ENCODE measurements at regions of chr18 and their contacts with region 1.

Region 1: DNA sequence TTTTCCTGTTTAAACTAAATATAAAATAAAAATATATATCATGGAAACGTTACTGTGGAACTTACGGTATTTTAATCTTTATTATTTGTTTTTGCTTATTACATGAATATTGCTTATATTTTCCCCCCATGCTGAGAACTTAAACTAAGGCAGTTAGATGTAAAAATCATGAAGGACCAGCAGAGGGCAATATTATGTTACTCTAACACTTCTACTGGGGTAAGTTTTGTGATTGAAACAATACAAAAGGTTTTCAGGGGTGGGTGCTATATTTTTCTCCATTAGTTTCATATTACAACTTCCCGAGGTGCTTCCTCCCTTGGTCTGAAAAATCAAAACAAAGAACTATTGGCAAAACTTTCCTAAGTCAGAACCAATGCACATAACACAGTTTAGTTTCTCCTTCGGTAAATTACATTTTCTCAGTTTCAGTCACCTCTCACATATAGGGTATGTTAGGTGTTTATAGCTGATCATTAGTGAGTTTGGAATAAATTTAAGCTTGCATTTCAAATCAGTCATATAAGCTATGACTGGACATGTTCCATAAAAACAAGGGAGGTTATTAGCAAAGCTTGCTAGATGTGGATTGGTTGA is 54.8 kb downstream of the ZNF407 start:
- DNase-seq: no peak
- H3K4me3 ChIP-seq: no peak overlapping the region
- H3K27ac ChIP-seq: peak overlapping the region in 1 of 4 donors; percentile 46
- H3K4me1 ChIP-seq: peaks cover 0 to 25% (median 4%) of the 10 kb centered on the region in 4 donors
- H3K27me3 ChIP-seq: no peaks in the 10 kb centered on the region
- CTCF ChIP-seq: peak in 3 of 4 experiments; percentile 38 to 56 (median 55)
- EP300 ChIP-seq: no peak
- POLR2A ChIP-seq: no peak

Region 2: DNA sequence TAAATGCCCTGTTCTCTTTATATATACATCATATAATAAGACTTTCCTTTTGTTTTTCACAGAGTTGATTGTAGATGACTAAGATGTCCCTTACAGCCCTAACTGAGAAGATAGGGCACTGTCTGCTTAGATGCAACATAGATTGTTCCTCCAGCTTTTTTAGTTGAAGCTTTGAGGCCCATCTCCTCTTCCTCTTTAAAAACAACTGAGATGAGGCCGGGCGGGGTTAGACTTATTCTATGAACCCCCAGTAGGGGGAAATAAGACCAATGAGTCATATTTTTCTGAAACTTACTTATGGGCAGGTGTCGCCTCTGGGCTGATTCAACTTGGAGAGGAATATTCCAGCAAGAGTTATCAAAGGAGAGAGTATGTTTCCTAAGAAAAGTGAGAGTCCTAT is 589.5 kb before region 1 on chr18:
- intact Hi-C with region 1: no loop called
- DNase-seq: no peak
- H3K4me3 ChIP-seq: no peak overlapping the region
- H3K27ac ChIP-seq: no peak overlapping the region
- H3K4me1 ChIP-seq: no peaks in the 10 kb centered on the region
- H3K27me3 ChIP-seq: no peaks in the 10 kb centered on the region
- CTCF ChIP-seq: no peak
- EP300 ChIP-seq: no peak
- POLR2A ChIP-seq: no peak

Region 3: GRCh38 chr18:75041586-75041985 is 389.1 kb after region 1 on chr18:
- intact Hi-C with region 1: loop called (anchors 5 kb)
- DNase-seq: no peak
- H3K4me3 ChIP-seq: no peak overlapping the region
- H3K27ac ChIP-seq: no peak overlapping the region
- H3K4me1 ChIP-seq: peaks cover 0 to 18% (median 6%) of the 10 kb centered on the region in 4 donors
- H3K27me3 ChIP-seq: no peaks in the 10 kb centered on the region
- CTCF ChIP-seq: peak in 2 of 4 experiments; percentile 9 to 16
- EP300 ChIP-seq: no peak
- POLR2A ChIP-seq: no peak

Region 4: GRCh38 chr18:75161256-75162028 is 509.0 kb after region 1 on chr18:
- intact Hi-C with region 1: loop called (anchors 5 kb)
- DNase-seq: no peak
- H3K4me3 ChIP-seq: peak overlapping the region; percentile 21 to 47 (median 38)
- H3K27ac ChIP-seq: peak overlapping the region in 3 of 4 donors; percentile 54 to 73 (median 55)
- H3K4me1 ChIP-seq: peaks cover 0 to 34% (median 7%) of the 10 kb centered on the region in 4 donors
- H3K27me3 ChIP-seq: no peaks in the 10 kb centered on the region
- CTCF ChIP-seq: no peak
- EP300 ChIP-seq: no peak
- POLR2A ChIP-seq: no peak

Region 5: DNA sequence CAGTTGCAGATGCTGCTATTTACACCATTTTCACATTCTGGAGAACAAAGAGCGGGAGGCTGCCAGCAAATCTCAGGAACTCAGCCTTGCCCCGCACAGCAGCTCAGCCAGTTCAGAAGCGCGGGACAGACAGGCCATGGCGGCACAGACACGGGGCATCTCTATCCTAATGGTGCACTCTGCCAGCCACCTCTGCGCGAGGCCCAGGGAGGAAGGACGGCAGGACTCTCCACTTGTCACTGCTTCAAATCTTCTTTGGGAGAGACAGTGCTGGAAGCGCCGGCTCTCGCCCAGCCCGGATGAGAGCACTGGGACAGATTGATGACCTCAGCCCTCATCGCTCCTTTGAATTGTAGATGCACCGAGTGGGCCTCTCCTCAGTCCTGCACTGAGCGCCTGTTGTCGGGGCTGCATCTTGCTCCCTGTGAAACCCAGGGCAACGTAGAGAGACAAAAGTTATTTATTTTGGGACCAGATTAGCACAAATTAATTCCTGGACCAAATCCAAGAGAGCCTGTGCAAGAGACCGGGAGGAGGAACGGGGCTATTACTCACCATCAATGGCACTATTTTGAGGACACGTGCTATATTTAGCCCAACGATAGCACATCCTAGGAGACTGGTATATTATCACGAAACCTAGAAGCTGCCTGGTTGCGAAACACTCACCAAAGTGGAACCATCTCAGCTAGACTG is 986.4 kb after region 1 on chr18:
- intact Hi-C with region 1: loop called (anchors 10 kb)
- DNase-seq: peak; percentile 76
- H3K4me3 ChIP-seq: peak overlapping the region; percentile 0 to 48 (median 42)
- H3K27ac ChIP-seq: peak overlapping the region; percentile 57 to 88 (median 83)
- H3K4me1 ChIP-seq: peaks cover 0 to 51% (median 26%) of the 10 kb centered on the region in 4 donors
- H3K27me3 ChIP-seq: no peaks in the 10 kb centered on the region
- CTCF ChIP-seq: no peak
- EP300 ChIP-seq: no peak
- POLR2A ChIP-seq: no peak

Region 6: GRCh38 chr18:76349067-76349715 is 1696.7 kb after region 1 on chr18:
- intact Hi-C with region 1: loop called (anchors 2 kb)
- DNase-seq: peak; percentile 85
- H3K4me3 ChIP-seq: peak overlapping the region in 1 of 4 donors; percentile 13
- H3K27ac ChIP-seq: no peak overlapping the region
- H3K4me1 ChIP-seq: peaks cover 2 to 29% (median 28%) of the 10 kb centered on the region in 4 donors
- H3K27me3 ChIP-seq: no peaks in the 10 kb centered on the region
- CTCF ChIP-seq: peak; percentile 67 to 90 (median 84)
- EP300 ChIP-seq: no peak
- POLR2A ChIP-seq: no peak

Measured in sigmoid colon (tissue), 7 donors.